ENCODE measurements at regions of chr16 and their contacts with region 1.

Region 1: DNA sequence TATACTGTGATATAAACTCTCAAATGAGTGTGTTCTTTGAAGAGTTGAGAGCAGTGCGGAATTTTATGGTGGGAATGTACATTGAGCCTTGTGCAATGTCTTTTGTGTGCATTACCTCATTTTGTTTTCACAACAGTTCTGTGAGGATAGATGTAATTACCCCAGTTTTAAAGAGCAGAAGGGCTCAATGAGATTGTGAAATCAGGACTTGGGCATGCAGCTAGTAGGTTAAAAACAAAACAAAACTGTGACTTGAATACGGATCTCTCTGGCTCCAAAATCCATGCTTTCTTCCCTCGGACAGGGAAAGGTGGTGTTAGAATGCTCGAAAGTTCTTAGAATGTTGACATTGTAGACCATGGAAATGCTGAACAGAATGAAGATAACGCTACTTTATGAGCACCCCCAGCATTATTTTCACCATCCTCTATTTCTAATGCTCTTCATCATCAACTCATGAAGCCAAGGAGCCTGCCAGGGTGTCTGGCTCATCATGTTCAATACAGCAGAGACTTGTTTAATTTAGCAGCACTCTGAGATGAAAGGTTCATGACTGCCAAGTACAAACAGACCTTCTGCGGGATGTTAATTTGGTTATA is 17.1 kb downstream of the MRTFB start:
- DNase-seq: no peak
- H3K4me3 Mint-ChIP-seq: no peak overlapping the region
- H3K27ac Mint-ChIP-seq: peak overlapping the region; percentile 52
- H3K4me1 Mint-ChIP-seq: peaks cover 27% of the 10 kb centered on the region
- H3K27me3 Mint-ChIP-seq: no peaks in the 10 kb centered on the region
- CTCF ChIP-seq: no peak

Region 2: GRCh38 chr16:13951611-13952010 is 136.6 kb before region 1 on chr16:
- CTCF ChIA-PET with region 1: no interaction called
- intact Hi-C with region 1: loop called (anchors 5 kb)
- DNase-seq: no peak
- H3K4me3 Mint-ChIP-seq: no peak overlapping the region
- H3K27ac Mint-ChIP-seq: no peak overlapping the region
- H3K4me1 Mint-ChIP-seq: peaks cover 24% of the 10 kb centered on the region
- H3K27me3 Mint-ChIP-seq: no peaks in the 10 kb centered on the region
- CTCF ChIP-seq: no peak

Region 3: DNA sequence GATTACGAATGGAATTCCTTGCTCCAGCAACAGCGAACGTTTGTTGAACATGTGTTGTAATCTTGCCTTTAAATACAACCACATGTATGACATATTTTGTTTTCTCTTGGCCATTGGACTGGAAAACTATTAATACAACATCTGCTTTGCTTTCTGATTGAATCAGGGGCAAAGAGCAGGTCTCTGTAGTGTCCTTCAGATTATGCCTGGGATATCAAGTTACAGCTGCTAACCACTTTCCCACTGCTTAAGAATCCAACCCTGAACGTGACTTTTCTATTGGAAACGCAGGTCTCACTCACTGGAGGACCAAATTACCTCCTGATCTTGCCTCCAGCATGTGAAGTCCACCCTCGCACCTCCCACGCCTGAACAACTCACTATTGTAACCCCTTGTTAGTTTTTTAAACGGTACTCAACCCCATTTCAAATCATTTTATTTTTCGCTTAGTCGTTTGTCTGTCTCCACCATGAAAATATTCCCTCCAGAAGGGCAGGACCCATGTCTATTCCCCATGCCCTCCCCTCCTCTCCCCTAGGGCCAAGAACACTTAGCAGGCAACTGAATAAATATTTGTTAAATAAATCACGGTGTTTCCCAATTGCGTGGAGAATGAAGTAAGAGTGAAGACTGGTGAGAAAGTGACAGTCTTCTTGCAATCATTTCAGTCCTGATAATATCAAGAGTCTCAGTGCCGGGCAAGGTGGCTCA is 74.5 kb before region 1 on chr16:
- CTCF ChIA-PET with region 1: no interaction called
- intact Hi-C with region 1: no loop called
- DNase-seq: no peak
- H3K4me3 Mint-ChIP-seq: no peak overlapping the region
- H3K27ac Mint-ChIP-seq: no peak overlapping the region
- H3K4me1 Mint-ChIP-seq: peaks cover 28% of the 10 kb centered on the region
- H3K27me3 Mint-ChIP-seq: no peaks in the 10 kb centered on the region
- CTCF ChIP-seq: no peak

Region 4: GRCh38 chr16:14409563-14409962 is 321.3 kb after region 1 on chr16:
- CTCF ChIA-PET with region 1: no interaction called
- intact Hi-C with region 1: no loop called
- DNase-seq: peak; percentile 22
- H3K4me3 Mint-ChIP-seq: no peak overlapping the region
- H3K27ac Mint-ChIP-seq: no peak overlapping the region
- H3K4me1 Mint-ChIP-seq: no peaks in the 10 kb centered on the region
- H3K27me3 Mint-ChIP-seq: no peaks in the 10 kb centered on the region
- CTCF ChIP-seq: no peak

Measured in Calu3 (cell line).